ENCODE measurements at regions of chr12 and their contacts with region 1.

Region 1: DNA sequence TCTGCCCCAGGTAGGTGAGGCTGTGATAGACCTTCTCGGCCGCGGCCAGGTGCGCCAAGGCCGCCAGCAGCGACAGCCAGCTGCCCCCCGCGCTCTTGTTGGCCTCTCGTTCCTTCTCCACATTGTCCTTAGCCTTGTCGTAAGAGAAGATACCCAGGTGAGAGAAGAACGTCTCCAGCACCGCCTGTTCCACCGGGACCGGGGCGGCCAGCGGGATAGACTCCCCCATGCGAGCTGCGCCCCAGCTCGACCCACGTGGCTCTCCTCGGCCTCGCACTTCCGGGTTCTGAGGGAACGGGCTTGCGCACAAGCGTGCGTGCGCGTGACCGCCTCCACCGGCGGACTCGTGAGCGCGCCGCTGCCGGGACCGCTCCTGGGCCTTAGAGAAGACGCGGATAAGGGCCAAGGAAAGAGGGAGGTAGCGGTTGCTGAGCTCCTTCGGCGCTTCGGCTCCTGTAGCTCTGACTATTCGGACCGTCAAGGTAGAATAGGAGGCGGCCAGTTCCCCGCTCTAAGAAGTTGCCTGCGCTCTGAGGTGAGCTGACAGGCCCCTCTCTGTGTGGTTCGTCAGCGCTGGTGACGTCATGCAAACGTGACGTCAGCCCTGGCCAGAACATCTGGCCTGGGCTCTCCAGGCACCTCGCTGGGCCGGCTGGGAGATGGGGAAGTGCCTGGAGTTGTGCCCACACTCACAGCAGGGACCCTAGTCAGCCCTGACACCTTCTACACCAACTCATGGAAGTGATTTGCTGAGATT is at the start of gene KICS2:
- DNase-seq: peak; percentile 94
- H3K4me3 Mint-ChIP-seq: peak within 1 kb of the TSS; percentile 83
- H3K27ac Mint-ChIP-seq: peak within 1 kb of the TSS; percentile 88
- H3K4me1 Mint-ChIP-seq: peaks cover 18% of the 10 kb centered on the region
- H3K27me3 Mint-ChIP-seq: no peaks in the 10 kb centered on the region
- CTCF ChIP-seq: no peak
- total RNA-seq, gene KICS2: 9.5 and 11.9 TPM in 2 replicates

Region 2: DNA sequence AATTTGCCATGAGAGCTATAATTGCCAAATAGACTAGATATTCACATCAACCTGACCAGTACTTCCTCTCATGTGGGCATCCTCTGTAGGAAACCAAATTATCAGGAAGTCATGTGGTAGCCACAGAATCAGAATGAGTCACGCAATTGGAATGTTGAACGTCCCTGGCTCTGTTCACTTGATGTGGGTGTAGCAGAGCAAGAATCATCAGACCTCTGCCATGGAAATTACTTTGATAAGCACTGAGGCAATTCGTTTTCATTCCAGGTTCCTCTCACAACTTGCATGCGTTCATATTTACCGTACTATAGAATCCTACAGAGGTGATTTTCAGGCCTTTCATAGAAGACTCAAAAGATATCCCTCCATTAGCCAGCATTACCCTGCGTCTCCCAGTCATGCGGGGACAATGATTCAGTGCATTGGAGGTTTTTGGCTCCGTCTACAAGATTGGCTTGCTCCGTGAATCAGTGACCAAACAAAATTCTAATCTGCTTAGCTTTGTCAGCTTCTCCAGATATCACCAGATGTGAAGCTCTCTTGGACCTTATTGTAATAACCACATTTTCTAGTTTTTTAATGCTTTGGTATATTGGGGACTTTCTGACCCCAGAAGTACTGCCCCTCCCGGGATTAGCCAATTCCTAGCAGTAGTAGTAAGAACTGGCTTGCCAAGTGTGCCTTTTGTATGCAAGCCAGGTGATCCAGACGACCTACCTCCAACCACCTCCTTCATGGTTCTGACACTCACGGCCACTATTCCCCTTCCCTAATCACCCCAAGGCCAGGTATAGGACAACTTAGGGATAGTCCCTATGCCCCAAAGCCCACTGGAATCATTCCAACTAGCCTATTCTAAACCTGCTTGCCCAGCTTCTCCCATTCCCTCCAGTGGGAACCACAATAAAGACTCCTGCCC is 133.5 kb before region 1 on chr12:
- CTCF ChIA-PET with region 1: no interaction called
- POLR2A ChIA-PET with region 1: interaction called, 18 read pairs
- intact Hi-C with region 1: loop called (anchors 5 kb)
- DNase-seq: peak; percentile 94
- H3K4me3 Mint-ChIP-seq: peak overlapping the region; percentile 73
- H3K27ac Mint-ChIP-seq: peak overlapping the region; percentile 99
- H3K4me1 Mint-ChIP-seq: peaks cover 23% of the 10 kb centered on the region
- H3K27me3 Mint-ChIP-seq: no peaks in the 10 kb centered on the region
- CTCF ChIP-seq: no peak

Region 3: DNA sequence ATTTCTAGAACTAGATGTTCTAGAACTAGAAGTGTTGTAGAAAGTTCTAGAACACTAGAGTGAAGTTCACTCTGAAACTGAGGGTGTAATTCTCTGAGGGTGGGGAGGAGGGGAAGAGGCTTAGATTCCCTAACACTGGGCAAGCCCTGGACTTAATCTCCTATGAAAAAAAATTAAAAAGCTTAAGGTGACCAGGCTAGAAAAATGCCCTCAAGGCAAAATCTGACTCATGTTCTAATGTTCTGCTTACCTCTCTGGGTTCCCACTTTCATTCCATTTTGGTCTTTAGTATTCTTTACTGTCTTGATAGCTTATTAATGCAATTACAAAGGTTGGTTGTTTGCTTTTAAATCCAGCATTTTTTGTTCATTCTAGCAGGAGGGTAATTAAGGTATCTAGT is 101.6 kb before region 1 on chr12:
- CTCF ChIA-PET with region 1: no interaction called
- POLR2A ChIA-PET with region 1: interaction called, 10 read pairs
- intact Hi-C with region 1: no loop called
- DNase-seq: peak; percentile 75
- H3K4me3 Mint-ChIP-seq: no peak overlapping the region
- H3K27ac Mint-ChIP-seq: peak overlapping the region; percentile 86
- H3K4me1 Mint-ChIP-seq: peaks cover 20% of the 10 kb centered on the region
- H3K27me3 Mint-ChIP-seq: no peaks in the 10 kb centered on the region
- CTCF ChIP-seq: no peak

Region 4: DNA sequence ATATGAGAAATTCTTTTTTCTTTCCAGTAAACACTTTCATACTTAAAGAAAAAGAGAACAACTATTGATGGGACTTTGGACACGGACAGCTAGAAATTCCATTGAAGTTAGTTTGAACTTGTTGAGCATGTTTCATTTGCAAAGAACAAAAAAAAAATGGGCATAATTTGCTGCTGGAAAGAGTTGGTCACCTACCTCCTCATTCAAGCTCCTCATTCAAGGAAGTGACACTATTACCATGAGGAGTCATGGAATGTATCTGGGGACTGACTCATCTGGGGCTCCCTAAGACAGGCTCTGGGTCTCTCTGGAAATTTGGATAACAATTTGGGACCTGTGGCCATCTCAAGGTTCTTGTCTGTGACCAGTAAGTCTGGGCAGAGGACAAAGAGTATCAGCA is 50.5 kb before region 1 on chr12:
- CTCF ChIA-PET with region 1: no interaction called
- POLR2A ChIA-PET with region 1: interaction called, 10 read pairs
- intact Hi-C with region 1: no loop called
- DNase-seq: peak; percentile 72
- H3K4me3 Mint-ChIP-seq: peak overlapping the region; percentile 45
- H3K27ac Mint-ChIP-seq: peak overlapping the region; percentile 97
- H3K4me1 Mint-ChIP-seq: peaks cover 29% of the 10 kb centered on the region
- H3K27me3 Mint-ChIP-seq: no peaks in the 10 kb centered on the region
- CTCF ChIP-seq: no peak

Region 5: GRCh38 chr12:64236549-64236948 is 14.4 kb after region 1 on chr12:
- CTCF ChIA-PET with region 1: no interaction called
- POLR2A ChIA-PET with region 1: interaction called, 10 read pairs
- intact Hi-C with region 1: no loop called
- DNase-seq: peak; percentile 45
- H3K4me3 Mint-ChIP-seq: no peak overlapping the region
- H3K27ac Mint-ChIP-seq: no peak overlapping the region
- H3K4me1 Mint-ChIP-seq: peaks cover 6% of the 10 kb centered on the region
- H3K27me3 Mint-ChIP-seq: no peaks in the 10 kb centered on the region
- CTCF ChIP-seq: peak; percentile 37

Measured in MCF 10A (cell line).